ENCODE measurements at regions of chr17 and their contacts with region 1.

Region 1: DNA sequence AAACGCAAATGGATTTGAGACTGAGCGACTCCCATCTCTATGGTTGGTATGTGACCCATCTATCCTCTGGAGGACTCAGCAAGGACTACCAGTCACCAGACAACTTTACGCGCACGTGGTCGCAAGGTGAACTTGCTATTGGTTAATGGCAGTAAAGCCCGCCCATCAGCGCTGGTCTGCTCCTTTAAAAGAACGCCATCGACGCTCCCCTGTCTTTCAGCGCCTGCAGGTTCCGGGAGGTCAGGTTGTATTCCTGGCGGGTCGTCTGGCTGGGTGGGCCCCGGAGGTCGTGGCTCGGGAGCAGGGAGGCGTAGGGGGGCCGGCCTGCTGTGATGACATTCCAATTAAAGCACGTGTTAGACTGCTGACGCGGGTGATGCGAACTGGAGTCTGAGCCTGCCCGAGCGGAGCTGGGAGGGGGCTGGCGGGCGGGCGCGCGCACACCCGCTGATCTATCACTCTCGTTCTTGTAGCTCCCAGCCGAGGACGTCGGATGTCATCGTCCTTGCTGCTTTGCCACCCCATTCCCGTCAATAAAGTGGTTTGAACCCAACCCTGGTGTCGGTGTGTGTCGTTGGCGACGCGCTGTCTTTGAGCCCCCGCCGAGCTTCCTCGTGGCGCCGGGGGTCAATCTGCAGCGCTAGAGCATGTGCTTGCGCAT is 15.9 kb upstream of the ERN1 start:
- DNase-seq: peak; percentile 91 to 99 (median 95)
- ATAC-seq: peak; percentile 88
- H3K4me3 ChIP-seq: peak overlapping the region; percentile 78
- H3K4me3 Mint-ChIP-seq: no peak overlapping the region
- H3K27ac ChIP-seq: peak overlapping the region; percentile 73 to 91
- H3K27ac Mint-ChIP-seq: no peak overlapping the region
- H3K4me1 ChIP-seq: peaks cover 21% of the 10 kb centered on the region
- H3K4me1 Mint-ChIP-seq: peaks cover 19% of the 10 kb centered on the region
- H3K27me3 ChIP-seq: no peaks in the 10 kb centered on the region
- H3K27me3 Mint-ChIP-seq: no peaks in the 10 kb centered on the region
- CTCF ChIP-seq: no peak

Region 2: DNA sequence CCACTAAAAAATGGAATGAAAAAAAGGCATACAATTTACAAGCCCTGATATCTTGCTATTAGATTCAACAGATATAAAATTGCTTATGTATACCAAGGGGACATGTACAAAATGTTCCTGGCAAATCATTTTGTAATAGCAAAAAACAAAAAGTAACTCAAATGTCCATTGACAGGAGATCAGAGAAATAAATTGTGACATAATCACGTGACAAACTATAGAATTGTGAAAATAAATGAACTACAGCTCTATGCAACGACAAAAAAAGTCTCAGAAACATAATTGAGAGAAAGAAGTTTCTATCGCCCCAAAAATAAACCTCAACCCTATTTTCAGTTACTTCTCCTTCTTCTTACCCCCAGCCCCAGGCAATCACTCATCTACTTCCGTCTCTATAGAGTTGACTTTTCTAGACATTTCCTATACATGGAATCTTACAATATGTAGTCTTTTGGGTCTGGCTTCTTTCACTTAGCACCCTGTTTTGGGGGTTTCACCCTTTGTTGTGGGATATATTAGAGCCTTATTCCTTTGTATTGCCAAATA is 681.1 kb before region 1 on chr17:
- CTCF ChIA-PET with region 1: no interaction called
- POLR2A ChIA-PET with region 1: no interaction called
- intact Hi-C with region 1: no loop called
- DNase-seq: no peak
- ATAC-seq: no peak
- H3K4me3 ChIP-seq: no peak overlapping the region
- H3K4me3 Mint-ChIP-seq: no peak overlapping the region
- H3K27ac ChIP-seq: no peak overlapping the region
- H3K27ac Mint-ChIP-seq: no peak overlapping the region
- H3K4me1 ChIP-seq: no peaks in the 10 kb centered on the region
- H3K4me1 Mint-ChIP-seq: no peaks in the 10 kb centered on the region
- H3K27me3 ChIP-seq: no peaks in the 10 kb centered on the region
- H3K27me3 Mint-ChIP-seq: peaks cover 9% of the 10 kb centered on the region
- CTCF ChIP-seq: no peak

Region 3: DNA sequence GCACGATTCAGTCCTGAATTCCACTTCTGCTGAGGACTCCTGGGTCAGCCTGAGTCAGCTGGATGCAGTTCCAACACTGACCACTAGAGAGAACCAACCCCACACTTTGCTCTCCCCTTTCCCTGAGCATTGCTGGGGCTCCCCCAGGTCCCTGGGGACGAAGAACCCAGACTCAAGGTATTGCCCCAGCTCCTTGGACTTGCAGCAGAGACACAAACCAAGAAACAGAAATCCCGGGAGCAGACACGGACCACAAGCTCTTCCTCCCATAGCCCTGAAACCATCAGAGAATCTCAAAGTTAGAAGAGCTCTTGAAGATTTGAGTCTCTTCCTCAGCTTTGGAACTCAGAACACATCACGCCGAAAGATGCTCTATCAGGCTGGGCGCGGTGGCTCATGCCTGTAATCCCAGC is 226.6 kb before region 1 on chr17:
- CTCF ChIA-PET with region 1: interaction called, 3 read pairs
- POLR2A ChIA-PET with region 1: interaction called, 8 read pairs
- intact Hi-C with region 1: loop called in 1 of 2 experiments (anchors 5 kb)
- DNase-seq: peak; percentile 58 to 89 (median 66)
- ATAC-seq: peak; percentile 100
- H3K4me3 ChIP-seq: no peak overlapping the region
- H3K4me3 Mint-ChIP-seq: no peak overlapping the region
- H3K27ac ChIP-seq: no peak overlapping the region
- H3K27ac Mint-ChIP-seq: peak overlapping the region; percentile 9
- H3K4me1 ChIP-seq: peaks cover 8% of the 10 kb centered on the region
- H3K4me1 Mint-ChIP-seq: peaks cover 6% of the 10 kb centered on the region
- H3K27me3 ChIP-seq: no peaks in the 10 kb centered on the region
- H3K27me3 Mint-ChIP-seq: no peaks in the 10 kb centered on the region
- CTCF ChIP-seq: peak; percentile 95

Region 4: GRCh38 chr17:64025732-64026294 is 120.1 kb before region 1 on chr17:
- CTCF ChIA-PET with region 1: interaction called, 9 read pairs
- POLR2A ChIA-PET with region 1: interaction called, 116 read pairs
- intact Hi-C with region 1: no loop called
- DNase-seq: peak; percentile 89 to 98 (median 93)
- ATAC-seq: peak; percentile 84
- H3K4me3 ChIP-seq: peak overlapping the region; percentile 46
- H3K4me3 Mint-ChIP-seq: peak overlapping the region; percentile 68
- H3K27ac ChIP-seq: peak overlapping the region; percentile 74 to 91
- H3K27ac Mint-ChIP-seq: peak overlapping the region; percentile 100
- H3K4me1 ChIP-seq: peaks cover 78% of the 10 kb centered on the region
- H3K4me1 Mint-ChIP-seq: peaks cover 59% of the 10 kb centered on the region
- H3K27me3 ChIP-seq: no peaks in the 10 kb centered on the region
- H3K27me3 Mint-ChIP-seq: no peaks in the 10 kb centered on the region
- CTCF ChIP-seq: peak; percentile 99

Region 5: GRCh38 chr17:64073771-64074703 is 71.8 kb before region 1 on chr17:
- CTCF ChIA-PET with region 1: no interaction called
- POLR2A ChIA-PET with region 1: interaction called, 12 read pairs
- intact Hi-C with region 1: no loop called
- DNase-seq: peak in 1 of 14 experiments; percentile 34
- ATAC-seq: no peak
- H3K4me3 ChIP-seq: no peak overlapping the region
- H3K4me3 Mint-ChIP-seq: no peak overlapping the region
- H3K27ac ChIP-seq: no peak overlapping the region
- H3K27ac Mint-ChIP-seq: no peak overlapping the region
- H3K4me1 ChIP-seq: peaks cover 21% of the 10 kb centered on the region
- H3K4me1 Mint-ChIP-seq: peaks cover 26% of the 10 kb centered on the region
- H3K27me3 ChIP-seq: no peaks in the 10 kb centered on the region
- H3K27me3 Mint-ChIP-seq: no peaks in the 10 kb centered on the region
- CTCF ChIP-seq: no peak

Region 6: DNA sequence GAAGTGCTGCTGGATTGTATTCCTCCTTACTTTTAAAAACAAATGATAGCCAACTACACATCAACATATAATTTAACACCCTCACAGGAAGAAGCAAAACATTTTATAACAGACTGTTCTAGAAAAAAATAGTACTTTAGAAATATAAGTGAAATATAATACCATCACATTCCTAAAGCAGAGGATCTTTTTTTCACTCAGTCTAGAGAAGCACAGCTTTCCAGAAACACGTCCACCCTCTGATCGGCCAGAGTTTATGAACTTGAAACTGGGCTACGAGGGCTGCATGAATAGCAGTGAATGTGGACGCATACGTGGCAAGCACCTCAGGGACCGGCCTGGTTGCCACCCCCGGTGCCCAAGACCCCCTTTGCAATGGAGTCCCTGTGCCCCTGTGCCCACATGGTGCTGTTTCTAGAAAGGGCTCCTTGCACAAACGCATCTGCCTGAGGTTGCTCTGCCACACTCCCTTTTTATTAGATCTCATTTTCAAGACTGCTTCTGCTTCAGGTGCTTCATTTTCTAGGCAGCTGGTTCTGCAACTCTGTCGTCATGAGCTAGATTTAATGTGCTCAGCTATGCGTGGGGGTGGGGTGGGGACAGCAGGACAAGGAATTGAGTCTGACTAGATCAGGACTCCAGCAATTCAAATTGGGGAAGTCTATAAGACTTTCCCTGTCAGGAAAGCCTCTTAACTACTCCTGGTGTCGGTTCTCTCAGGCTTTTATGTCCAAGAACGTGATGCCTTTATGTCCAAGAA is 13.1 kb after region 1 on chr17:
- CTCF ChIA-PET with region 1: no interaction called
- POLR2A ChIA-PET with region 1: interaction called, 23 read pairs
- intact Hi-C with region 1: no loop called
- DNase-seq: no peak
- ATAC-seq: no peak
- H3K4me3 ChIP-seq: no peak overlapping the region
- H3K4me3 Mint-ChIP-seq: no peak overlapping the region
- H3K27ac ChIP-seq: no peak overlapping the region
- H3K27ac Mint-ChIP-seq: no peak overlapping the region
- H3K4me1 ChIP-seq: no peaks in the 10 kb centered on the region
- H3K4me1 Mint-ChIP-seq: peaks cover 7% of the 10 kb centered on the region
- H3K27me3 ChIP-seq: no peaks in the 10 kb centered on the region
- H3K27me3 Mint-ChIP-seq: no peaks in the 10 kb centered on the region
- CTCF ChIP-seq: no peak

Region 7: DNA sequence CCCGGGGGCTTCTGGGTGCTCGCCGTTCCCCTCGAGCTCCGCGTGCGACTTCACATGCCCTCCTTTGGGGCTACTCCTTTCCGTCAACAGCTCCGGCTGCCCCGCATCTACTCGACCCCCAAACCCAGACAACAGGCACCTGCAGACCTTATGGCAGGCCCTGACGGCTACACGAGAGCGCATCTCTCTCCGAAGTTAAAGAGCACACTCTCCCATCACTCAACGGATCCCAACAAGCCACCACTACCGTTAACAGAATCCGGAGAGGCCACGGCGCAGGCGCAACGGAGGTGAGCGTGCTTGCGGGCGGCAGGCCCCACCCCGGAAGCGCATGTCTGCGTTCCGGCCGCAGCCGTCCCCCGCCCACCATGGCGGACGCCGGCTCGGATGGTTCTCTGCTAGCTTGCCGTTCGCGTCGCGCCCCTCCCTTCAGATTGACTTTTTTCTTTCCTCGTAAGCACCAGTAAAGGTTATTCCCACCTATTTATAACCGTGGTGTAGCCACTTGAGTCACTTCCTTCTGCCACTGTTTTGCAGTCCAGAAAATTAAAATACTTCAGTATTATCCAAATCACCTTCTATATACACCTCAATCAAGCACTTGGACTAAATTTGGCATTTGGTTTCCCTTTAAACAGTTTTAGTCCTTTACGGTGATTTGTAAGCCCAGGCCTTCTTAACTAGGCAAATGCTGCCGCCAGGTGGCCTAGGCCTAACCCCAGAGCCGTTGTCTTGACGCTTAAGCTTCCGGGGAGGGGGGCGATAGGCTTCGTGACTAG is 351.1 kb after region 1 on chr17 and contains the start of gene POLG2:
- CTCF ChIA-PET with region 1: no interaction called
- POLR2A ChIA-PET with region 1: interaction called, 14 read pairs
- intact Hi-C with region 1: loop called in 1 of 2 experiments (anchors 10 kb)
- DNase-seq: peak; percentile 93 to 99 (median 95)
- ATAC-seq: peak; percentile 77
- H3K4me3 ChIP-seq: peak within 1 kb of the TSS; percentile 77
- H3K4me3 Mint-ChIP-seq: peak within 1 kb of the TSS; percentile 100
- H3K27ac ChIP-seq: peak within 1 kb of the TSS; percentile 85 to 91
- H3K27ac Mint-ChIP-seq: peak within 1 kb of the TSS; percentile 99
- H3K4me1 ChIP-seq: peaks cover 44% of the 10 kb centered on the region
- H3K4me1 Mint-ChIP-seq: peaks cover 83% of the 10 kb centered on the region
- H3K27me3 ChIP-seq: no peaks in the 10 kb centered on the region
- H3K27me3 Mint-ChIP-seq: no peaks in the 10 kb centered on the region
- CTCF ChIP-seq: peak; percentile 56
- total RNA-seq, gene POLG2: 32.8 to 34.1 TPM